ENCODE measurements at regions of chr15 and their contacts with region 1.

Region 1: GRCh38 chr15:78859971-78860732 is 12.5 kb upstream of the MORF4L1 start:
- DNase-seq: peak; percentile 74
- ATAC-seq: peak; percentile 89
- H3K4me3 ChIP-seq: peak overlapping the region; percentile 66 to 98 (median 78)
- H3K27ac ChIP-seq: peak overlapping the region; percentile 53
- H3K4me1 ChIP-seq: peaks cover 14% of the 10 kb centered on the region
- H3K27me3 ChIP-seq: no peaks in the 10 kb centered on the region
- CTCF ChIP-seq: peak; percentile 59
- EP300 ChIP-seq: no peak
- POLR2A ChIP-seq: no peak
- RAD21 ChIP-seq: peak; percentile 24; the same call in 1 of the 2 replicates

Region 2: GRCh38 chr15:78811124-78811824 is 48.9 kb before region 1 on chr15 and contains the start of gene ADAMTS7:
- CTCF ChIA-PET with region 1: no interaction called
- POLR2A ChIA-PET with region 1: no interaction called
- in situ Hi-C with region 1: no loop called
- intact Hi-C with region 1: loop called (anchors 5 kb)
- DNase-seq: no peak
- ATAC-seq: peak; percentile 83
- H3K4me3 ChIP-seq: peak within 1 kb of the TSS; percentile 58 to 75 (median 63)
- H3K27ac ChIP-seq: no peak within 1 kb of the TSS
- H3K4me1 ChIP-seq: peaks cover 19% of the 10 kb centered on the region
- H3K27me3 ChIP-seq: peaks cover 12 to 51% of the 10 kb centered on the region in 2 experiments
- CTCF ChIP-seq: peak; percentile 52
- EP300 ChIP-seq: no peak
- POLR2A ChIP-seq: no peak
- RAD21 ChIP-seq: no peak
- total RNA-seq, gene ADAMTS7: 0.09 TPM in 1 of 2 replicates, not detected in the other

Region 3: DNA sequence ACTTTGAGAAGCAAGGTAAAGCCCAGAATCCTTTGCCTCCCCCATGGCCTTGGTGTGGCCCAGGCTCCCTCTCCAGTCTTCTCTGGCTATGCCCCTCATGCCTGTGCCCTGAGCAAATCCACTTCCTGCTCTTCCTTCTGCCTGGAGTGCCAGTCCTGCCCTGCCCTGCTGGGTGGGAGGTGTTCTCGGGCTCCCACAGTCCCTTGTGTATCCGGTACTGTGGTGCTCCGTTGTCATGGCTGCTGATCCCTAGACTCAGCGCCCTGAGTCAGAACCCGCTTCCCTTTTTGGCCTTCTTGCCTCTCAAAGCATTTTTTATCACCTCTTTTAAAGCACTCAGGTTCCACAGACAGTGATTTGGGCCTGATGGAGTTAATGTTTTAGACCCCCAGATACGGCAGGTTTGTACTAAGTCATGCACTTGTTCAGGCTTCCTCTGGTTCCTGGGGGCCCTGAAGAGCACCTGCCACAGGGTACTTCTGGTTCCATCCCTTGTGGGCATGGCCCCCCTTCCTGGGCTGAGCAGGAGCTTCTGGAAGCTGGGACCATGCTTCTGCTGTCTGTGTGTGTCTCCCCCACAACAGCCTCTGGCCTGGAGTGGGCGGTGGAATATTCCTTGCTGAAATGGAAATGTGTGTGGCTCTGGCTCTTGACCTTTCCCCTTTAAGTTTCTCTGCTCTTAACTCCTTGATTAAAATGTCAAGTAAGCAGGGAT is 19.3 kb before region 1 on chr15:
- CTCF ChIA-PET with region 1: no interaction called
- POLR2A ChIA-PET with region 1: no interaction called
- in situ Hi-C with region 1: no loop called
- intact Hi-C with region 1: no loop called
- DNase-seq: no peak
- ATAC-seq: no peak
- H3K4me3 ChIP-seq: no peak overlapping the region
- H3K27ac ChIP-seq: no peak overlapping the region
- H3K4me1 ChIP-seq: peaks cover 5% of the 10 kb centered on the region; the same call in 1 of the 2 replicates
- H3K27me3 ChIP-seq: peaks cover 2 to 27% of the 10 kb centered on the region in 2 experiments; a peak in 3 of 5 replicates
- CTCF ChIP-seq: no peak
- EP300 ChIP-seq: no peak
- POLR2A ChIP-seq: no peak
- RAD21 ChIP-seq: no peak